ENCODE measurements at regions of chr11 and their contacts with region 1.

Region 1: GRCh38 chr11:47387911-47388678 is 9.7 kb upstream of the SPI1 start:
- DNase-seq: no peak
- ATAC-seq: no peak
- H3K4me3 Mint-ChIP-seq: no peak overlapping the region
- H3K27ac Mint-ChIP-seq: no peak overlapping the region
- H3K4me1 Mint-ChIP-seq: peaks cover 7% of the 10 kb centered on the region
- H3K27me3 Mint-ChIP-seq: no peaks in the 10 kb centered on the region

Region 2: DNA sequence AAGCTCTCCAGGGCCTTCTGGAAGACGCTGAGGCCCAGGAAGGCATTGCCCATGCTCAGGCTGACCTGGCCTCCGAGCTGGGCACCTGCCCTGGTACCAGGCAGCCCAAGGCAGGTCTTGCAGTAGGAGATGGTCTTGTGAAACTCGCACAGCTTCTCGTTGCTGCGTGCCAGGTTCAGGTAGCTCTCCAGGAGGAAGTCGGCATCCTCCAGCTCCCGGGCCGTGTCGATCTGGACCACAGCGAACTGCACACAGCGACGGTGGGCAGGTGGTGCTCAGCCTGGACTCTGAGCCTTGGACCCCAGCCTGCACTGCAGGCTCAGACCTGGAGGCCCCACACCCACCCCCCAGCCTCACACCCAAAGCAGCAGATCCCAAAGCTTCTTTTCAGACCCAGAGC is 59.8 kb after region 1 on chr11:
- CTCF ChIA-PET with region 1: no interaction called
- POLR2A ChIA-PET with region 1: interaction called, 11 read pairs
- intact Hi-C with region 1: no loop called
- DNase-seq: no peak
- ATAC-seq: no peak
- H3K4me3 Mint-ChIP-seq: no peak overlapping the region
- H3K27ac Mint-ChIP-seq: no peak overlapping the region
- H3K4me1 Mint-ChIP-seq: no peaks in the 10 kb centered on the region
- H3K27me3 Mint-ChIP-seq: no peaks in the 10 kb centered on the region